HepG2 (cell line): ENCODE measurements at regions of chr1 and their contacts with region 1.

Region 1: GRCh38 chr1:183030053-183030452 is 6.8 kb downstream of the LAMC1 start:
- DNase-seq: peak; percentile 97
- ATAC-seq: peak; percentile 99
- H3K4me3 ChIP-seq: peak overlapping the region in 1 of 3 experiments; percentile 23; a peak in 1 of 6 replicates
- H3K27ac ChIP-seq: peak overlapping the region; percentile 75
- H3K4me1 ChIP-seq: peaks cover 83% of the 10 kb centered on the region
- H3K27me3 ChIP-seq: no peaks in the 10 kb centered on the region
- CTCF ChIP-seq: no peak
- EP300 ChIP-seq: peak; percentile 88 to 94
- POLR2A ChIP-seq: peak in 1 of 2 experiments; percentile 59; a peak in 1 of 4 replicates
- RAD21 ChIP-seq: peak; percentile 28; the same call in 1 of the 2 replicates

Region 2: DNA sequence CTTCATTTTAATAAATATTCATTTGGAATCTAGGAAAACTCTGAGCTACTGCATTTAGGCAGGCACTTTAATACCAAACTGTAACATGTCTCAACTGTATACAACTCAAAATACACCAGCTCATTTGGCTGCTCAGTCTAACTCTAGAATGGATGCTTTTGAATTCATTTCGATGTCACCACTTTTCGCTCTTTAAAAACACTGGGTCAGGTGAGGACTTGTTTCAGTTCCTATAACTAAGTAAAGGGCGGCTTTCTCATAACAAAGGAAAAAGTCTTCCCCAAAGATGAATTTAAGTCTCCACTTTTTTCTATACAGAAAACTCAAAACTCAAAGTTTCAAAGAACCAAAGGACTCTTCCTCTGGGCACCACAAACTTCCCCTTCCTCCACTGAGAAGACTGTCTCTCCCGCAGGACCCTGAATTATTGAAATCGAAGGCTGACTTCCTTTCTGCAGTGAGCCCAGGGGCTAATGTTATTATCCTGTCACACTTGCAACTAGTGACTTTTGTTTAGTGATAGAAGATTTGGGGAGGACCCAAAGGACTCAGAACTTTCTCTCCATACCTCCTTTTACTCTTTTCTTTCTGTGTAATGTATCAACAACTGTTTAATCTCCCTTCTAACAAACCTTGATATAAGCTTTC is 200.6 kb before region 1 on chr1:
- CTCF ChIA-PET with region 1: no interaction called
- POLR2A ChIA-PET with region 1: no interaction called
- in situ Hi-C with region 1: no loop called
- intact Hi-C with region 1: no loop called
- DNase-seq: no peak
- ATAC-seq: no peak
- H3K4me3 ChIP-seq: no peak overlapping the region
- H3K27ac ChIP-seq: no peak overlapping the region
- H3K4me1 ChIP-seq: no peaks in the 10 kb centered on the region
- H3K27me3 ChIP-seq: peaks cover 0 to 26% of the 10 kb centered on the region in 2 experiments; a peak in 2 of 5 replicates
- CTCF ChIP-seq: no peak
- EP300 ChIP-seq: no peak
- POLR2A ChIP-seq: no peak
- RAD21 ChIP-seq: no peak

Region 3: GRCh38 chr1:182990413-182991144 is 39.5 kb before region 1 on chr1:
- CTCF ChIA-PET with region 1: no interaction called
- POLR2A ChIA-PET with region 1: no interaction called
- in situ Hi-C with region 1: no loop called
- intact Hi-C with region 1: no loop called
- DNase-seq: no peak
- ATAC-seq: no peak
- H3K4me3 ChIP-seq: no peak overlapping the region
- H3K27ac ChIP-seq: no peak overlapping the region
- H3K4me1 ChIP-seq: no peaks in the 10 kb centered on the region
- H3K27me3 ChIP-seq: no peaks in the 10 kb centered on the region
- CTCF ChIP-seq: no peak
- EP300 ChIP-seq: no peak
- POLR2A ChIP-seq: no peak
- RAD21 ChIP-seq: no peak

Region 4: DNA sequence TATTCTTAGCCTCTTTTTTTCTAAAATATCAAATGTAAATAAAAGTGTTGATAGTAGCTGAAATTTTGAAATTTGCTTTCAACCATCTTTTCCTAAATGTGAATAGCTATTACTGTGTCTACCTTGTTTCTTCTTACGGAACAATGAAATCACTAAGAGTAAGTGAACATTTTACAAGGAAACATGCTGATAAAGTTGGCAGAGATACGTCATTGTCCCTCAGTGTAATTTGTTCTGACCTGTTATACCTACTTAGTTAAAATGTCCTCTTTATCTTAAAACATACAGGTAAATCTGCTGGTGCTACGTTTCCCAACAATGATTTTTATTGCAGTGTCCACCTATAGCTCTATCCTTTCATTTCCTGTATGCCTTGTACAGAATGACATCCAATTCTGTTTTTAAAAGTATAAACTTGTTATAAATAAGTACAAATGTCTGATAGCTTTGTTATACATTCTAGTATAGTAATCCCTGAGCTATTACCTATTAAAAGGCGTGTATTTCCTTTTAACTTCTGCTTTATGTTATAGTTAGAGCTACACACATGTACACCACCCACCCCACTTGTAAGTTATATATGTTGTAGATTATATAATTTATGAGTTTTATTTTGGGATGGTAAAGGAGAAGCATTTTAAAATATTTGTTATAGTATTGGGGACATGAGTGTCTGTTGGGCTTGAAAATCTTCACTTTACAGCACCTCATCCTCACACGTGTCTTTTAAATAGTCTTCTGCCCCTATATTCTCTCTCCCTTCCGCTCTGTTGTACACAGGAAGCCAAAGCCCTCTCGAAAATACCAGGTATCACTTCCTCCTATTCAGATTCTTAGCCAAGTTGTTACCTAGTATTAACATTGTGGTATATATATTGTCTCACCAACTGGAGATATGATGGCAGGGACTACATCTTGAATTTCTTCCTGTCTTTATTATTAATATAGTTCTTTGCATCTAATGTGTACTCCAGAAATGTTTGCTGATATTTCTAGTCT is 18.3 kb after region 1 on chr1:
- CTCF ChIA-PET with region 1: no interaction called
- POLR2A ChIA-PET with region 1: no interaction called
- in situ Hi-C with region 1: no loop called
- intact Hi-C with region 1: loop called (anchors 1 kb)
- DNase-seq: no peak
- ATAC-seq: no peak
- H3K4me3 ChIP-seq: no peak overlapping the region
- H3K27ac ChIP-seq: no peak overlapping the region
- H3K4me1 ChIP-seq: peaks cover 24% of the 10 kb centered on the region
- H3K27me3 ChIP-seq: no peaks in the 10 kb centered on the region
- CTCF ChIP-seq: no peak
- EP300 ChIP-seq: no peak
- POLR2A ChIP-seq: no peak
- RAD21 ChIP-seq: no peak

Region 5: DNA sequence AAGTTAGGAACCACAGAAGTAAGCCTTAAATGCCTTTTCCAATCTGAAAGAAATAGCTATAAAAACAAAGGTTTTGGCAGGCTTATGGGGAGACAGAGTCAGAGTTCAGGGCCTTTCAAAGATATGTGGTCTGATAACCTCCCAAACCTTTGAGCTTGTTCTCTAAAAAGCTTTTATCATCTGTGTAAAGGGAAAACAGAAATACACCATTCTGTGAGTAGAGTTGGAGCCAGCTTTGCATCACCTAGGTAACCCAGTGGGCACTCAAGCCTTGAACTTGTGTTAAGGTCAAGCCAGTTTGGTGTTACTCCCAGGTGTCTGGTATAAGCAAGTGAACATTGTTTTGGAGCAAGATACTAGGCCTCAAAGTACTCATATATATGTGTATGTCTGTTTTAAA is 43.3 kb after region 1 on chr1:
- CTCF ChIA-PET with region 1: no interaction called
- POLR2A ChIA-PET with region 1: no interaction called
- in situ Hi-C with region 1: no loop called
- intact Hi-C with region 1: loop called (anchors 1 kb)
- DNase-seq: peak; percentile 87
- ATAC-seq: peak; percentile 88
- H3K4me3 ChIP-seq: no peak overlapping the region
- H3K27ac ChIP-seq: peak overlapping the region; percentile 81
- H3K4me1 ChIP-seq: peaks cover 88% of the 10 kb centered on the region
- H3K27me3 ChIP-seq: no peaks in the 10 kb centered on the region
- CTCF ChIP-seq: no peak
- EP300 ChIP-seq: peak in 1 of 2 experiments; percentile 74; a peak in 2 of 4 replicates
- POLR2A ChIP-seq: no peak
- RAD21 ChIP-seq: no peak